ENCODE measurements at regions of chr3 and their contacts with region 1.

Region 1: DNA sequence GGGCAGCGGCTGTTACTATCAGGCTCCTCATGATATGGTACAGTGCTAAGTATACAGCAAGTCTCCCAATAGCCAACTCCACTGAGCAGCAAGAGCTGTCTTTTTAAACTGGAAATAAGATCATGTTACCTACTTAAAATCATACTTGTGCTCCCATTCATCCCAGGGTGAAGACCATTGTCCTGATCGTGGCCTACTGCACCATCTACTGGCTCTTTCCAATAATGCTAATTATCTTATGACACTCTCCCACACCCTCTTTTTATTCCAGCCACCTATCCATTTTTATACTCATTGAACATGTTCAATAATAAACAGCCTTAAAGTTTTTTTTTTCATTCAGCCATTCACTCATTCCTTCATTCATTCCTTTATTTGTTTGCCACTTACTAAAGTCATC is 117.7 kb downstream of the GBE1 start:
- DNase-seq: peak; percentile 9
- ATAC-seq: peak; percentile 67
- H3K4me3 ChIP-seq: no peak overlapping the region
- H3K27ac ChIP-seq: no peak overlapping the region
- H3K4me1 ChIP-seq: no peaks in the 10 kb centered on the region
- H3K27me3 ChIP-seq: no peaks in the 10 kb centered on the region
- CTCF ChIP-seq: peak; percentile 45
- EP300 ChIP-seq: no peak
- POLR2A ChIP-seq: no peak
- RAD21 ChIP-seq: no peak

Region 2: DNA sequence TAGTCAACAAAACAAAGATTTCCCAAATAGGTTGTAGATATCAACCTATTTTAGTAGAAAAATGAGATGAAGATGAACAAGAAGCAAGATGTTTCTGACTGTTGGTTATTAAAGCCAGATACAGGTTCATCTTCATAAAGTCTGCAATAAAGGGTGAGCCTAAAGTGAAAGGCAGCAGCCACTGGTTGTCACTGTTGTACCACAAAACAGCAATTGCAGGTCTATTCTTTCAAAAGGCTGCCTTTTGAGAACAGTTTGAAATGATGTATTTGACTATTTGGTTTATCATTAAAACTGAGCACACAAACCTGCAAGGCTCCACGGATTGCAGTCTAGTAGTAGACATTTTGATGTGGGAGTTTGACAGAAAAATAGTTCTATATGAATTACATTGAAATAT is 425.7 kb before region 1 on chr3:
- CTCF ChIA-PET with region 1: no interaction called
- POLR2A ChIA-PET with region 1: no interaction called
- in situ Hi-C with region 1: no loop called
- intact Hi-C with region 1: loop called (anchors 10 kb)
- DNase-seq: peak; percentile 23
- ATAC-seq: peak; percentile 82
- H3K4me3 ChIP-seq: no peak overlapping the region
- H3K27ac ChIP-seq: no peak overlapping the region
- H3K4me1 ChIP-seq: no peaks in the 10 kb centered on the region
- H3K27me3 ChIP-seq: no peaks in the 10 kb centered on the region; a peak in 1 of 5 replicates
- CTCF ChIP-seq: peak; percentile 80
- EP300 ChIP-seq: no peak
- POLR2A ChIP-seq: no peak
- RAD21 ChIP-seq: peak; percentile 67

Region 3: GRCh38 chr3:81302045-81302444 is 341.7 kb before region 1 on chr3:
- CTCF ChIA-PET with region 1: no interaction called
- POLR2A ChIA-PET with region 1: no interaction called
- in situ Hi-C with region 1: no loop called
- intact Hi-C with region 1: loop called (anchors 2 kb)
- DNase-seq: peak; percentile 48
- ATAC-seq: peak; percentile 59
- H3K4me3 ChIP-seq: no peak overlapping the region
- H3K27ac ChIP-seq: no peak overlapping the region
- H3K4me1 ChIP-seq: peaks cover 28% of the 10 kb centered on the region
- H3K27me3 ChIP-seq: peaks cover 0 to 9% of the 10 kb centered on the region in 2 experiments; a peak in 1 of 5 replicates
- CTCF ChIP-seq: peak; percentile 70
- EP300 ChIP-seq: no peak
- POLR2A ChIP-seq: no peak
- RAD21 ChIP-seq: 0 out of 2 replicates have a peak, but pooled peaks have one; percentile 26

Region 4: DNA sequence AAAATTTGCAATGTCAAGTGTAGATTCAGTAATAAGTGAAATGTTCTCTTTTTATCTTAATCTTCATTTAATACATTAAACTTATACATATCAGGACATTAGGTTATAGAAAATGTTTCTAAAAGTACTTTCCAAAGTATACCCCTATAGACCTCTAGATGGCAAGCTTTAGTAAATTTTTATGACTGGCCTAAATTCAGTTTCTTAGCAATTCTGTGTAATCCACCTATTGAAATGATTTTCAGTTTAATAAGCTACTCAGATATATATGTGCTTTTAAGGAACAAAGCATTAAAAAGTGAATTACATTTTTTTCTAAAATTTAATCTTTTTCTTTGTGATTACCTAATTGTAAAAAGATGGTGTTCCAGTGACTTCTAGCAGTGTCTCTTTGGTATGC is 224.5 kb before region 1 on chr3:
- CTCF ChIA-PET with region 1: no interaction called
- POLR2A ChIA-PET with region 1: no interaction called
- in situ Hi-C with region 1: no loop called
- intact Hi-C with region 1: loop called (anchors 5 kb)
- DNase-seq: peak; percentile 1
- ATAC-seq: no peak
- H3K4me3 ChIP-seq: no peak overlapping the region
- H3K27ac ChIP-seq: no peak overlapping the region
- H3K4me1 ChIP-seq: no peaks in the 10 kb centered on the region
- H3K27me3 ChIP-seq: no peaks in the 10 kb centered on the region
- CTCF ChIP-seq: peak; percentile 40
- EP300 ChIP-seq: no peak
- POLR2A ChIP-seq: no peak
- RAD21 ChIP-seq: no peak

Region 5: DNA sequence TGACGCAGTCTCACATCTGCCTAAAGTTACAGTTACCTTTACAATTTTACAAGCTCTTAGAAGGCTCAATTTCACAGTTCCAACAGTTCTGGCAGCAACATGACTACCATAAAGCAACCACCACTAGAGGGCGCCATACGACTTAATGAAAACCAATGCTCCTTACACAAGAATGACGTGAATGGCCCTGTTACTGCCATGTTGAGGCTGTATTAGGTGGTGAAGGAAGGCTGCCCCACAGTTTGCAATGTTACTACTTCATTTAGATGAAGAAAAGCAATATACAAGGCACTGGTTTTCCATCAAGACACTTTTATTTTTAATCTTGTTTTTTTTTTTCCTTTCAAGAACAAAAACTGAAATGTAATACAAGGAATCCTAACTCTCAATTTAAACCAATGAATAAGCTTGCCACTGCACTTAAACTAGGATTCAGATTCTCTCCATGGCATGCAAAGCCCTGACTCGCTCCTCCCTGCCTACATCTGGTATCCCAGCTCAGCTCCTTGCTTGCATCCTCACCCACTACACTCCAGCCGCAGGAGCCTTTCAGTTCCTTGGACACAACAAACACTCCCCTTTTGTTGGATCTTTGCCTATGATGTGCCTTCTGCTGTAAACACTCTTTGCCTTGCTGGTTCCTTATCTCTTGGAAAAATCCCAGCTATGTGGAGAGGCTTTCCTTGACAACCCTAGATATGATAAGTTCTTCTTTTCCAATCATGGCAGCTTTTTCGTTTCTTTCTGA is 153.0 kb before region 1 on chr3:
- CTCF ChIA-PET with region 1: no interaction called
- POLR2A ChIA-PET with region 1: no interaction called
- in situ Hi-C with region 1: no loop called
- intact Hi-C with region 1: loop called (anchors 1 kb)
- DNase-seq: peak; percentile 81
- ATAC-seq: peak; percentile 99
- H3K4me3 ChIP-seq: no peak overlapping the region
- H3K27ac ChIP-seq: no peak overlapping the region
- H3K4me1 ChIP-seq: no peaks in the 10 kb centered on the region
- H3K27me3 ChIP-seq: no peaks in the 10 kb centered on the region
- CTCF ChIP-seq: peak; percentile 78
- EP300 ChIP-seq: no peak
- POLR2A ChIP-seq: no peak
- RAD21 ChIP-seq: peak; percentile 41; the same call in 1 of the 2 replicates

Region 6: GRCh38 chr3:81581966-81582599 is 61.6 kb before region 1 on chr3:
- CTCF ChIA-PET with region 1: interaction called, 7 read pairs
- POLR2A ChIA-PET with region 1: no interaction called
- in situ Hi-C with region 1: no loop called
- intact Hi-C with region 1: loop called (anchors 1 kb)
- DNase-seq: peak; percentile 20
- ATAC-seq: peak; percentile 87
- H3K4me3 ChIP-seq: no peak overlapping the region
- H3K27ac ChIP-seq: no peak overlapping the region
- H3K4me1 ChIP-seq: no peaks in the 10 kb centered on the region
- H3K27me3 ChIP-seq: no peaks in the 10 kb centered on the region
- CTCF ChIP-seq: peak; percentile 72
- EP300 ChIP-seq: no peak
- POLR2A ChIP-seq: no peak
- RAD21 ChIP-seq: peak; percentile 25; the same call in 1 of the 2 replicates

Region 7: GRCh38 chr3:81816473-81817250 is 172.9 kb after region 1 on chr3:
- CTCF ChIA-PET with region 1: no interaction called
- POLR2A ChIA-PET with region 1: no interaction called
- in situ Hi-C with region 1: no loop called
- intact Hi-C with region 1: no loop called
- DNase-seq: no peak
- ATAC-seq: peak; percentile 63
- H3K4me3 ChIP-seq: no peak overlapping the region
- H3K27ac ChIP-seq: no peak overlapping the region
- H3K4me1 ChIP-seq: peaks cover 9% of the 10 kb centered on the region
- H3K27me3 ChIP-seq: no peaks in the 10 kb centered on the region
- CTCF ChIP-seq: no peak
- EP300 ChIP-seq: no peak
- POLR2A ChIP-seq: no peak
- RAD21 ChIP-seq: no peak